Left ventricle myocardium inferior (tissue), 1 donor: ENCODE measurements at regions of chr4 and their contacts with region 1.

Region 1: GRCh38 chr4:67615119-67615518 is 56.6 kb downstream of the STAP1 start:
- DNase-seq: no peak
- H3K4me3 ChIP-seq: no peak overlapping the region
- H3K27ac ChIP-seq: no peak overlapping the region
- H3K4me1 ChIP-seq: no peaks in the 10 kb centered on the region
- H3K27me3 ChIP-seq: no peaks in the 10 kb centered on the region
- CTCF ChIP-seq: no peak

Region 2: GRCh38 chr4:67744561-67745283 is 129.6 kb after region 1 on chr4:
- intact Hi-C with region 1: no loop called
- DNase-seq: no peak
- H3K4me3 ChIP-seq: no peak overlapping the region
- H3K27ac ChIP-seq: no peak overlapping the region
- H3K4me1 ChIP-seq: no peaks in the 10 kb centered on the region
- H3K27me3 ChIP-seq: no peaks in the 10 kb centered on the region
- CTCF ChIP-seq: no peak

Region 3: GRCh38 chr4:67928575-67928974 is 313.5 kb after region 1 on chr4:
- intact Hi-C with region 1: no loop called
- DNase-seq: no peak
- H3K4me3 ChIP-seq: no peak overlapping the region
- H3K27ac ChIP-seq: no peak overlapping the region
- H3K4me1 ChIP-seq: no peaks in the 10 kb centered on the region
- H3K27me3 ChIP-seq: no peaks in the 10 kb centered on the region
- CTCF ChIP-seq: no peak

Region 4: DNA sequence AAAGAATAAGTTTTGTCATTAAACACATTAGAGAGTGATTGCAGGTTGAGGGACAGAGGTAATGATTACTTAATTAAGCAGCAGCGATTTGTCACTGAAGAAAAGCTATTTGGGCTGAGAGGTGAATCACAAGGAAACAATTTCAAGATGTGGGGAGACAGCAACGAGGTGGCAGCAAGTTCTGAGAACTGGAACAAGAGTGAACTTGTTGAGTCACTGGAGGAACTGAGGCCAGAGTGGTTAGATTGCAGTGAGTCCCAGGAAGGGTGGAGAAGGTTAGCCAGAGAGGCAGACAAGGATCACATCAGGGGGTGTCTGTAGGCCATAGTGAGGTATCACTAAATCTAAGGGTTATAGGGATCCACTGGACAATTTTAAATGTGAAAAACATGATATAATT is 406.1 kb after region 1 on chr4:
- intact Hi-C with region 1: loop called (anchors 5 kb)
- DNase-seq: no peak
- H3K4me3 ChIP-seq: no peak overlapping the region
- H3K27ac ChIP-seq: no peak overlapping the region
- H3K4me1 ChIP-seq: no peaks in the 10 kb centered on the region
- H3K27me3 ChIP-seq: no peaks in the 10 kb centered on the region
- CTCF ChIP-seq: no peak